Left ventricle myocardium superior (tissue), 1 donor: ENCODE measurements at regions of chr10 and their contacts with region 1.

Region 1: DNA sequence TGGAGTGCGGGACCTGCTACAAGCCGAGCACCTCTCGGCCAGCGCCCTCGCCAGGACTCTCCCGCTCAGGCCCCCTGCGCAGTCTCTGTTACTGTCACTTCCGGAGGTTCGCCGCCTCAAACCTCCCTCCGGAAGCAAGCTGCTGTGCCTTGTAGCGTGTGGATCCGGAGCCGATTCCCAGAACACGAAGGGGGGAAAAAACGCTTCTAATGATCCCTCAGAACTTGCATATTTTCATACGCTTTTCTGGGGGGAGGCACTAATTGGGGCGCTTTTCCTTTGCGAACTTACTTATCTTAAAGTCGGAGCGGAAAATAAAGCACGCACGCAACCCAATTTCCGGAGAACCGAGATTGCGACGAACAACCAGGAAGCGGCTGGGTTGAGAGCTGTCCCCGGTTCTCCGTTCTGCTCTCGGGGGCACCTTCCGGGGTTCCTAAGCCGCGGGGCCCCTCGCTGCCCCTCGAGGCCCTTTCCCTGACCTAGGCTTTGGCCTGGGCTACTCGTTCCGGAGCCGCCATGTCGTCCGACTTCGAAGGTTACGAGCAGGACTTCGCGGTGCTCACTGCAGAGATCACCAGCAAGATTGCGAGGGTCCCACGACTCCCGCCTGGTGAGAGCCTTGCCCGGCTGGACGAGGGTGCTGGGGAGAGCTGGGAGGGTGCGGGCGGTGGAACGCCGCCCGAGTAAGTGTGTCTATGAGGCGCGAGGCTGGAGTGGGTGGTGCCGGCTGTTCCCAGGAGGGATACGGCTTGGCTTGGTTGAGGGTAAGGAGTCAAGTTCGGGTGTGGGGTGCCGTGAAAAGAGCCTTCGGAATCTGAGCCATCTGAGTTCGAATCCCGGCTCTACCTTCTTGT is at the starts of genes VTI1A and ZDHHC6:
- DNase-seq: peak; percentile 90
- ATAC-seq: peak; percentile 99
- total RNA-seq, gene VTI1A: 22.9 TPM
- total RNA-seq, gene ZDHHC6: 17.6 TPM

Region 2: GRCh38 chr10:112177247-112177646 is 269.8 kb before region 1 on chr10:
- intact Hi-C with region 1: loop called (anchors 10 kb)
- DNase-seq: no peak
- ATAC-seq: peak; percentile 87